ENCODE measurements at regions of chr4 and their contacts with region 1.

Region 1: DNA sequence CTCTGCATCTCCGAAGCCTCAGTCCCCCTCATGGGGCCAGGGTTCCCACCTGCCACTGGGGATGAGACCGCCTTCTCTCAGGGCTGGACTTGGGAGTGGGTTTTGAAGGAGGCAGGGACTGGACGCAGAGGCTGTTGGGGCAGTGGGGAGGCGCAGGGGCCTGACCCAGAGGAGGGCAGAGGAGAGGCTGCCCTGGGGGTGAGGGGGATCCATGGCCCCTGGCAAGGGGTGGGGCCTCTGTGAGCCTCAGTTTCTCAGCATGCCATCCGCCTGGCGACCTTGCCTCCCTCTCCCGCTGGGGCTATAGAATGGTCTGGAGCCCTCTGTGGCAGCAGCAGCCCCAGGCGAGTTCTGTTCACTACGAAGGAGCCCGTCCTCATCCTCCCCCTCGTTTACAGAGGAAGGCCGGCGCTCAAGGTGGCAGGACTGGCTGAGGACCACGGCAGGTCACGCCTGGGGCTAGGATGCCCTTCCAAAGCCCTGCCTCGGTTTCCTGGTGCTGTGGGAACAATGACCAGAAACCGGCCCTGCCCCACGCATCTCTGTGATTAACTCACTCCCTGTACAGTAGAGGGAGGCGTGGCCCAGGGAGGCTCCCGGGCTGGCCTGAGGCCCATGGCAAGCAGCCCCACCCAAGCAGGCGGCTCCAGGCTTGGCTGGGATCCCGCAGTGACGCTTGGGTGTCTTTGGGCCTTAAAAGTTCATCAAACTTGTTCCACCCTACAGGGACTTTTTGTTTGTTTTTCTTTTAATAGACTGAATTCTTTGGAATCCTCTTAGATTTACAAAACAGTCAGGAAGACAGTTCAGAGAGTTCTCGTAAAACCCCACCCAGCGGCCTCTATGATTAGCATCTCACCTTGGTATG is 16.0 kb upstream of the SH3TC1 start:
- DNase-seq: peak in 4 of 5 donors; percentile 47 to 80 (median 62)
- H3K4me3 ChIP-seq: no peak overlapping the region
- H3K27ac ChIP-seq: no peak overlapping the region
- H3K4me1 ChIP-seq: no peaks in the 10 kb centered on the region
- H3K27me3 ChIP-seq: no peaks in the 10 kb centered on the region
- CTCF ChIP-seq: no peak
- EP300 ChIP-seq: no peak
- POLR2A ChIP-seq: no peak

Region 2: GRCh38 chr4:8035371-8035780 is 147.7 kb before region 1 on chr4:
- intact Hi-C with region 1: no loop called
- DNase-seq: no peak
- H3K4me3 ChIP-seq: no peak overlapping the region
- H3K27ac ChIP-seq: no peak overlapping the region
- H3K4me1 ChIP-seq: no peaks in the 10 kb centered on the region
- H3K27me3 ChIP-seq: no peaks in the 10 kb centered on the region
- CTCF ChIP-seq: no peak
- EP300 ChIP-seq: no peak
- POLR2A ChIP-seq: no peak

Region 3: DNA sequence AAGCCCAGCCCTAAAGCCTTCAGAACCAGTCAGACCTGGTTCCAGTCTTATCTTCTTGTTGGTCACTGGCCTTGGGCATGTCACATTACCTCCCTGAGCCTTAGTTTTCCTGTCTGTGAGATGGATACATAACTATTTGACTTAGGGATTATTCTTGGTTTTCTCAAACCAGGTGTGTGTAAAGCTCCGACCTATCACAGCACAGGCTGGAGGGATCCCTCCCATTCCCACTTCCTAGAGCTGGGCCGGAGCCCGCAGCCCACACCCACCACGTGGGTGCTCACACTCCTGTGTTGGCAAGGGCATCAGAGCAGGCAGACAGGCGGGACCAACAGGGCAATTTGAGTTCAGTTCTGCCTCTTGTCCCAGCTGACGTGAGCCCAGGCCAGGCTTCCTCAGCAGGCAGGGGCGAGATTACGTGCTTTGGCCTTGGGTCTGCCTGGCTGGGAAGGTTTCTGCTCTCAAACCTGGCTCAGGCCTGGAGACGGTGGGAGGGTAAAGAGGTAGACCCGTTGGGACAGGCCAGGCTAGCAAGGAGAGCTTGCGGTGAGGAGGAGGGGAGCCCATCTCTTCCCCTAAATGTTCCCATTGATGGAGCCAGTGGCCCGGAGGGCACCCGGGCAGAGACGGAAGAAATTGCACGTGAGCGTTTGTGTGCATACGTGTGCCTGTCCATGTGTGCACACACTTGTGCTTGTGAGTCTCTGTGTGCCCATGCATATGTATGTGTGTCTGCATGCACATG is 15.2 kb after region 1 on chr4:
- intact Hi-C with region 1: no loop called
- DNase-seq: no peak
- H3K4me3 ChIP-seq: no peak overlapping the region
- H3K27ac ChIP-seq: peak overlapping the region in 1 of 2 donors; percentile 12
- H3K4me1 ChIP-seq: peaks cover 12% of the 10 kb centered on the region
- H3K27me3 ChIP-seq: no peaks in the 10 kb centered on the region
- CTCF ChIP-seq: no peak
- EP300 ChIP-seq: no peak
- POLR2A ChIP-seq: no peak

Region 4: DNA sequence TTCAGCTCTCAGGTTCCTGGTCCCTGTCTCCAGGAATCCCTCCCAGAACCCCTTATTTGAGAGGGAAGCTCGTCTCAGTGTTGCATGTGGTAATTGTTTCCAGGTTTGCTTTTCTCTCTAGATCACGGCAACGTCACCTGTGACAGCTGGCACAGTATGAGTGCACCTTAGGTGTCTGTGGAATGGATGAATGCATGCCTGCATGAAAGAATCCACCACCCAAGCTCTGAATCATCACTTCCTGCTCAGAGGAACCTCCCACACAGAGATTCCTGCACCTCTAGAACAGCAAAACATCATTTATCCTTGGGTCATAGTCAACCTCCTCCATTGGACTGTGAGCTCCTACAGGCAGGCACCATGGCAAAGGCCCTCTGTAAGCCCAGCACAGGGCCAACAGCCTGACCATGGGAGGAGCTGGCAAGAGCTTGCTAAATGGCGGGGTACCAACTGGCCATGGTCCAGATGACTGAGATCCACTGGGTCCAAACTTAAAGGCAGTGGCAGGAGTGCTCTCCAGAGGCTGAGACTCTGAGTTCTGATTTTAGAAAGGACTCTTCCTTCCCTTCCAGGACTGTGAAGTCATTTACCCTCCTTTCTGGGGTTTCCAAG is 1722.0 kb after region 1 on chr4:
- intact Hi-C with region 1: loop called in 1 of 4 experiments (anchors 10 kb)
- DNase-seq: no peak
- H3K4me3 ChIP-seq: no peak overlapping the region
- H3K27ac ChIP-seq: no peak overlapping the region
- H3K4me1 ChIP-seq: no peaks in the 10 kb centered on the region
- H3K27me3 ChIP-seq: no peaks in the 10 kb centered on the region
- CTCF ChIP-seq: no peak
- EP300 ChIP-seq: no peak
- POLR2A ChIP-seq: no peak

Measured in ovary (tissue), 10 donors.